MCF 10A (cell line): ENCODE measurements at regions of chr10 and their contacts with region 1.

Region 1: GRCh38 chr10:46228563-46229071 is 58.2 kb upstream of the ANTXRL start:
- DNase-seq: peak; percentile 81
- H3K4me3 Mint-ChIP-seq: no peak overlapping the region
- H3K27ac Mint-ChIP-seq: no peak overlapping the region
- H3K4me1 Mint-ChIP-seq: no peaks in the 10 kb centered on the region
- H3K27me3 Mint-ChIP-seq: peaks cover 22% of the 10 kb centered on the region
- CTCF ChIP-seq: peak; percentile 93

Region 2: GRCh38 chr10:46240684-46241565 is 12.3 kb after region 1 on chr10:
- CTCF ChIA-PET with region 1: interaction called, 21 read pairs
- POLR2A ChIA-PET with region 1: no interaction called
- intact Hi-C with region 1: no loop called
- DNase-seq: no peak
- H3K4me3 Mint-ChIP-seq: no peak overlapping the region
- H3K27ac Mint-ChIP-seq: no peak overlapping the region
- H3K4me1 Mint-ChIP-seq: no peaks in the 10 kb centered on the region
- H3K27me3 Mint-ChIP-seq: peaks cover 16% of the 10 kb centered on the region
- CTCF ChIP-seq: no peak

Region 3: GRCh38 chr10:46325023-46325422 is 96.4 kb after region 1 on chr10:
- CTCF ChIA-PET with region 1: interaction called, 10 read pairs
- POLR2A ChIA-PET with region 1: no interaction called
- intact Hi-C with region 1: no loop called
- DNase-seq: peak; percentile 26
- H3K4me3 Mint-ChIP-seq: no peak overlapping the region
- H3K27ac Mint-ChIP-seq: no peak overlapping the region
- H3K4me1 Mint-ChIP-seq: no peaks in the 10 kb centered on the region
- H3K27me3 Mint-ChIP-seq: no peaks in the 10 kb centered on the region
- CTCF ChIP-seq: peak; percentile 5

Region 4: GRCh38 chr10:46560381-46560780 is 331.8 kb after region 1 on chr10:
- CTCF ChIA-PET with region 1: interaction called, 12 read pairs
- POLR2A ChIA-PET with region 1: no interaction called
- intact Hi-C with region 1: no loop called
- DNase-seq: no peak
- H3K4me3 Mint-ChIP-seq: no peak overlapping the region
- H3K27ac Mint-ChIP-seq: no peak overlapping the region
- H3K4me1 Mint-ChIP-seq: no peaks in the 10 kb centered on the region
- H3K27me3 Mint-ChIP-seq: no peaks in the 10 kb centered on the region
- CTCF ChIP-seq: no peak